Astrocyte of the cerebellum (primary cell): ENCODE measurements at regions of chr1 and their contacts with region 1.

Region 1: GRCh38 chr1:2429780-2430591 is 17.6 kb upstream of the PEX10 start:
- DNase-seq: no peak
- H3K4me3 ChIP-seq: no peak overlapping the region
- CTCF ChIP-seq: peak; percentile 18

Region 2: GRCh38 chr1:2514863-2515762 is 85.1 kb after region 1 on chr1:
- in situ Hi-C with region 1: loop called (anchors 10 kb)
- DNase-seq: no peak
- H3K4me3 ChIP-seq: no peak overlapping the region
- CTCF ChIP-seq: peak; percentile 20

Region 3: DNA sequence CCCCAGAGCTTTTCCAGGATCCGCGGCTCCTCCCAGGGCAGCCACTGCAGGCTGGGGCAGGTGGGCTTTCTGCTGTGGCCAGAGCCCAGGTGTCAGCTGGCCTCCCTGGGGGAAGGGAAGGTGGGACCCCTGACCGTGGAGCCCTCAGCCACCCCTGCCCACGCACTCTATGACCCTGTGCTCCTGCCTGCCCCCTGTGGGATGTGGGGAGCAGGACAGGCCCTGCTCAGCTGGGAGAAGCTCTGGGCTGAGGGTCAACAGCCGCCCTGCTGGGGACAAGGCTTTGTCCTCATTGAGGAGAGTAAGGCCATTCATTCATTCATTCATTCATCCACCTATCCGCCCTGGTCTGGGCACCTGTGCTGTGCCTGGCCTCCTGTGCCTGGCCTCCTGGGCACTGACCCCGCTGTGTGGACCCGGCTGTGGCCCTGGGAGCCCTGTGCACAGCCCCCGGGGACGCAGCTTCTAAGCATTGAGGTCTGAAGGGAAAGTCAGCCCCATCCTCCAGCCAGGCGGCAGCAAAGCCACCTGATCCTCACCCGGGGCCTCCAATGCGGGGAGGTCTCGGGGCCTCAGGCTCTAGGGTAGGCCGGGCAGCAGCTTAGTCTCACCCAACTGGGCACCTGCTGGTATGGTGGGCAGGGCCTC is 132.0 kb after region 1 on chr1:
- in situ Hi-C with region 1: loop called (anchors 10 kb)
- DNase-seq: no peak
- H3K4me3 ChIP-seq: no peak overlapping the region
- CTCF ChIP-seq: peak; percentile 22